Cardiac septum (tissue), 1 donor: ENCODE measurements at regions of chr12 and their contacts with region 1.

Region 1: GRCh38 chr12:49121047-49121696 is 10.0 kb downstream of the TUBA1B start:
- DNase-seq: no peak

Region 2: GRCh38 chr12:49088190-49088931 is 32.8 kb before region 1 on chr12:
- intact Hi-C with region 1: loop called (anchors 2 kb)
- DNase-seq: peak; percentile 89